Activated naive CD4-positive, alpha-beta T cell treated with anti-CD3 and anti-CD28 coated beads, Interleukin-2, amount 10 ng/mL, durations not matched to agents 7 days and 5 days (primary cell): ENCODE measurements at regions of chr15 and their contacts with region 1.

Region 1: GRCh38 chr15:38683382-38684242 is 119.0 kb upstream of the RASGRP1 start:
- DNase-seq: peak; percentile 84
- H3K4me3 Mint-ChIP-seq: peak overlapping the region; percentile 35
- H3K27ac Mint-ChIP-seq: peak overlapping the region; percentile 98
- H3K4me1 Mint-ChIP-seq: peaks cover 79% of the 10 kb centered on the region
- H3K27me3 Mint-ChIP-seq: no peaks in the 10 kb centered on the region

Region 2: DNA sequence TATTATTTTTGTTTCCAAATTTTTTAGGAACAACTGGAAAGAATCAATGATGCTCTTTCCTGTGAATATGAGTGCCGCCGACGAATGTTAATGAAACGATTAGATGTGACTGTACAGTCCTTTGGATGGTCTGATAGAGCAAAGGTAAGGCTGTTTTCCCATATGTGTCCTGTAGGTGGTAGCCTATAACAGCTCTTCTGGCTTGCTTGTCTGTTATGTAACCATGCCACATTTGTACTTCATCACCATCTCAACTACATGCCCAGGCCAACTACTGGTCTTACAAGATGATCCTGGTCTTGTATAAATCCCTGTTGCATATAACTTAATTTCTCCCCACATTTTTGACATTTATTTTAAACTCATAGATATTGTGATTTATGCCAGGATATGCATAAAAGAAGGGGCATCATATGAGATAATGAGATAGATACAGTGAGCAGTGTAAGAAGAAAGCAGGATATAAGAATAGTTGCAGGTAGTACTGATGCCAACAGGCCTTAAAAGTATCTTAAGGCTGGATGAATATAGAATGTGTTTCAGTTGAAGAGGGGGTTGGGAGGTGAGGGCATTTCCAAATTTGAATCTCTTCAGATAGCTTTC is 209.4 kb before region 1 on chr15:
- CTCF ChIA-PET with region 1: interaction called, 66 read pairs
- DNase-seq: peak; percentile 45
- H3K4me3 Mint-ChIP-seq: no peak overlapping the region
- H3K27ac Mint-ChIP-seq: peak overlapping the region; percentile 22
- H3K4me1 Mint-ChIP-seq: peaks cover 4% of the 10 kb centered on the region
- H3K27me3 Mint-ChIP-seq: no peaks in the 10 kb centered on the region

Region 3: DNA sequence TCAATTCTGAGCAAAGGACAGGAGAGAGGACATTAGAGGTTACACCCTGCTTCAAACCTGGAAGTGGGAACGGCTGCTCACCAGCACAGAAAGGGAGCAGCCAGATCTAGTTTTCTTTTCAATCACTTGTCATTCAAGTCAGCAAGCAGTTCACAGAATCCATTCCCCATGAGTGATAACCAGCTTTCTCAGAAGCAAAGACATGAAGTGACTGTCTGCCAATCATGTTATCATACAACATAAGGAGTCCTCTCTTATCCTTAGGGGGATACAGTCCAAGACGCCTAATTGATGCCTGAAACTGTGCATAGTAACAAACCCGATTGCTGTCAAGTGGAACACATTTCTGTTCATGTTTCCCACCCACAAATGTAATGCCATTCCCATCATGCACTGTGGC is 175.0 kb before region 1 on chr15:
- CTCF ChIA-PET with region 1: interaction called, 15 read pairs
- DNase-seq: no peak
- H3K4me3 Mint-ChIP-seq: no peak overlapping the region
- H3K27ac Mint-ChIP-seq: peak overlapping the region; percentile 38
- H3K4me1 Mint-ChIP-seq: peaks cover 35% of the 10 kb centered on the region
- H3K27me3 Mint-ChIP-seq: no peaks in the 10 kb centered on the region

Region 4: DNA sequence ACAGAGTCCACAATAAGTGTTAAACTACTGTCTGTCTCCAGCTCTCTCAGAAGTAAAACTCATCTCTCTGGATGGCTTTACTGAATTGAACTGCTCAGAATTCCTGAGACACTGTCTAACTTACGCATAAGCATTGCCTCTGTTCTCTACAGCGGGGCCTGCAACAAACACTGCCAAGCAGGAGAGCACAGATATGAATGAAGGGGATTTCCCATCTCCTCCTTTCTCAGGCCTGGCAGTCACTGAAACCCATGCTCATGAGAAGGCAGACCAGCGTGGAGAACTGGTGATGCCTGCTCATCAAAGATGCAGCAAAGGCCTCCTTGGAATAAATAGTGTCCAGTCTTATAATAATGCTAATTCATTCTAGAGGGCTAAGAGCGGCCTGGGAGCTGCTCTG is 129.3 kb before region 1 on chr15:
- CTCF ChIA-PET with region 1: interaction called, 341 read pairs
- DNase-seq: no peak
- H3K4me3 Mint-ChIP-seq: no peak overlapping the region
- H3K27ac Mint-ChIP-seq: peak overlapping the region; percentile 21
- H3K4me1 Mint-ChIP-seq: peaks cover 88% of the 10 kb centered on the region
- H3K27me3 Mint-ChIP-seq: no peaks in the 10 kb centered on the region

Region 5: GRCh38 chr15:38647683-38648082 is 35.9 kb before region 1 on chr15:
- CTCF ChIA-PET with region 1: interaction called, 215 read pairs
- DNase-seq: no peak
- H3K4me3 Mint-ChIP-seq: no peak overlapping the region
- H3K27ac Mint-ChIP-seq: no peak overlapping the region
- H3K4me1 Mint-ChIP-seq: peaks cover 81% of the 10 kb centered on the region
- H3K27me3 Mint-ChIP-seq: no peaks in the 10 kb centered on the region

Region 6: GRCh38 chr15:38671675-38672254 is 11.8 kb before region 1 on chr15:
- CTCF ChIA-PET with region 1: interaction called, 45 read pairs
- DNase-seq: peak; percentile 61
- H3K4me3 Mint-ChIP-seq: peak overlapping the region; percentile 53
- H3K27ac Mint-ChIP-seq: peak overlapping the region; percentile 98
- H3K4me1 Mint-ChIP-seq: peaks cover 80% of the 10 kb centered on the region
- H3K27me3 Mint-ChIP-seq: no peaks in the 10 kb centered on the region

Region 7: DNA sequence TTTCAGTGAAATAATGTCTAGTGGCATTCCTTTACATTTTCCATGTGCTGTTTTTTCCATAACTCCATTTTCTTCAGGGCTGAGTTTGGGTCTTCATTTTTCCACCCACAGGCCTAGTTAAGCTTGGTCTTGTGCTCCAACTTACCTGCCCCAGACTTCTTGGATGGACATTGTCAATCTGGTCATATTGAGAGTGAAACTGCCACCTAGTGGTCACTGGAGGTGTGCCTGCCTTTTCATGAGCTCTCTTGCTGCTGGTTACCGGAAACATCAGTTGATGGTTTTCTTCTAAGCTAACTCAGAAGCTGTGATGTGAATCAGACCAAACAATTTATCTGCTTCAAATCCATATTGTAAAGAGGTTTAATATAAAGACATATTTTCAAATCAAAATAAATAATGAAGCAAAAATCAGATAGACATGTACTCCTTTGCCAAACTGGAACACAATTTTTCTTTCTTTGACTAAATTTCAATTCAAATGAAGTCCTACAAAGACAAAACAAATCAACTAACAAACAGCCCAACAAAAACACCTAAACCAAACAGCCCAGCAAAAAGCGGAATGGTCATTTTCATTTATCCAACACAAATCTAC is 16.1 kb after region 1 on chr15:
- CTCF ChIA-PET with region 1: interaction called, 139 read pairs
- DNase-seq: peak; percentile 86
- H3K4me3 Mint-ChIP-seq: no peak overlapping the region
- H3K27ac Mint-ChIP-seq: peak overlapping the region; percentile 64
- H3K4me1 Mint-ChIP-seq: peaks cover 66% of the 10 kb centered on the region
- H3K27me3 Mint-ChIP-seq: peaks cover 9% of the 10 kb centered on the region